ENCODE measurements at regions of chr1 and their contacts with region 1.

Region 1: GRCh38 chr1:60908174-60908573 is 174.2 kb upstream of the NFIA start:
- DNase-seq: no peak
- ATAC-seq: no peak
- H3K4me3 ChIP-seq: no peak overlapping the region
- H3K27ac ChIP-seq: no peak overlapping the region
- H3K4me1 ChIP-seq: peaks cover 0 to 3% of the 10 kb centered on the region in 2 donors
- H3K27me3 ChIP-seq: no peaks in the 10 kb centered on the region

Region 2: DNA sequence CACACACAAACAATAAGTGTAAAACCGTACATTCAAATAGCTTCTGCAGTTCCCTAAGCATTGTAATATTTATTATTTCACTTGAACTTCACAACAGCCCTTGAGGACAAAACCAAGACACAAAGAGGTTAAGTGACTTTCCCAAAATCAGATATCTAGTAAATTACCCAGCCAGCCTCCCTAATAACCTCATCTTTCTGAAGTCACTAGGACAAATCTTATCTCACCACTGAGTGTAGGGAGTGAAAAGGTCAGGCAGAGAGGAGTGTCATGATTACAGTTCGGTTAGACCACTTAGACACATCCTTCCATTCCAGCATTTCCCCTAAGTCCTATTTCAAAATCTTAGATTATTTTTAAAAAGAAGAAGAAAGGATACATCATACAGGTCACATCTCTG is 203.1 kb before region 1 on chr1:
- intact Hi-C with region 1: no loop called
- DNase-seq: no peak
- ATAC-seq: no peak
- H3K4me3 ChIP-seq: no peak overlapping the region
- H3K27ac ChIP-seq: no peak overlapping the region
- H3K4me1 ChIP-seq: no peaks in the 10 kb centered on the region
- H3K27me3 ChIP-seq: no peaks in the 10 kb centered on the region

Region 3: DNA sequence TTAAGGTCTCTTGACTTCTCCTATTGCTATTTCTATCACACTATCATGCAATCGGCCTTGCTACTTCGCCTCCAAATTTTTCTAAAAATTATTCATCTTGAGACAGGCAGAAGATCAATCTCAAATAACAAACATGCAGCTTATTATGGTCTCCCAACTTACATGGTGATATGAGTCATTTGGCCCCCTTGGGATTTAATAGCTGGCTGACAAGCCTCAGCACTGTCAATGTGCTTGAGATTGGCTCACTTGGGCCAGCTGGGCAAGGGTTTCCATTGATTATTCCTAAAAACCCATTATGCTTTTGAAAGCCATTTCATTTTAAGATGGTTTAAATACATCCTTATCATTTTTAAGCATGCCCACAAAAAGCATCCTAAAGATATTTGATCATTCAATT is 50.3 kb before region 1 on chr1:
- intact Hi-C with region 1: no loop called
- DNase-seq: no peak
- ATAC-seq: no peak
- H3K4me3 ChIP-seq: no peak overlapping the region
- H3K27ac ChIP-seq: no peak overlapping the region
- H3K4me1 ChIP-seq: no peaks in the 10 kb centered on the region
- H3K27me3 ChIP-seq: no peaks in the 10 kb centered on the region

Region 4: GRCh38 chr1:60930130-60930529 is 22.0 kb after region 1 on chr1:
- intact Hi-C with region 1: no loop called
- DNase-seq: no peak
- ATAC-seq: no peak
- H3K4me3 ChIP-seq: no peak overlapping the region
- H3K27ac ChIP-seq: no peak overlapping the region
- H3K4me1 ChIP-seq: no peaks in the 10 kb centered on the region
- H3K27me3 ChIP-seq: no peaks in the 10 kb centered on the region

Region 5: GRCh38 chr1:60949154-60949825 is 41.1 kb after region 1 on chr1:
- intact Hi-C with region 1: loop called in 1 of 2 experiments (anchors 2 kb)
- DNase-seq: no peak
- ATAC-seq: no peak
- H3K4me3 ChIP-seq: no peak overlapping the region
- H3K27ac ChIP-seq: no peak overlapping the region
- H3K4me1 ChIP-seq: no peaks in the 10 kb centered on the region
- H3K27me3 ChIP-seq: no peaks in the 10 kb centered on the region